Activated naive CD4-positive, alpha-beta T cell treated with anti-CD3 and anti-CD28 coated beads for 36 hours (primary cell): ENCODE measurements at regions of chr20 and their contacts with region 1.

Region 1: DNA sequence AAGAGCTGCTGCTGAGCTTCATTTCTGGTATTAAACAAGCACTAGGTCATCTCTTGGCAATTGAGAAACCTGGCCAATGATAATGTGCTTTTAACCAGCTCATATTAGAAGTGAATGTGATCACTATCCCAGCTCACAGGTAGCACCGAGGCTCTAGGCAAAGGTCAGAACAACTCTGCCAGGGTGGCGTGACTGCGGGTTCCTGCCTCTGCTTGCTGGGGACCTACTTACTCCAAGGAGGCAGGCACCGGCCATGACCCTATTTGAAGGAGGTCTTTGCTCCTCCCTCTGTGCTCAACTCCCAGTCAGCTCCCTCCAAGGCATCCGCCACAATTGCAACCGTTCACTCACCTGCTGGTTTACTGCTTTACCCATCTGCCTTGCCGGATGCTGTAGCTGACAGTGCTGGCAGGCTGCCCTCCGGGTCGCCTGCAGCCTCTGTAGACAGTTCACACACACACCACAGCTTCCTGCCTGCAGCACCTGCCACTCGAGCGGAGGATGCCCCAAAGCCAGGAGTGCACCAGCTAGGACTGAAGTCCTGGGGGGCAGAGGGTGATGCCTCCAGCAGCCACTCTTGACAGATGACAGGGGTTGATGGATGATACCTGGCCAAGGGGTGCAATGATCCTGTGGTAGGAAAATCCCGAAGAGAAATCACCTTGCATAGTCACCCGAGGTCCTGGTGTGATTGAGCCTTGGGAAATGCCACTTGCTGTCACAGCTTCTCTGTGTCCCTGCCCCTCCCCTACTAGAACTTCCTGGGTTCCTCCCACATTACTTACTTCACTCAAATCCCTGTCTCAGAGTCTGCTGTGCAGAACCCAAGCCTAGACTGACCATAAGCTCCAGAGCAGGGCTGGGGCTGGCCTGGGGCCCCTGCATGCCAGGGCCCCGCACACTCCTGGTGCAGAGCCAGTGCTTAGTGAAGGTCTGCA is 8.8 kb upstream of the VSX1 start:
- DNase-seq: peak; percentile 88
- H3K4me3 Mint-ChIP-seq: peak overlapping the region; percentile 41
- H3K27ac Mint-ChIP-seq: peak overlapping the region; percentile 44
- H3K4me1 Mint-ChIP-seq: peaks cover 28% of the 10 kb centered on the region
- H3K27me3 Mint-ChIP-seq: peaks cover 7% of the 10 kb centered on the region

Region 2: DNA sequence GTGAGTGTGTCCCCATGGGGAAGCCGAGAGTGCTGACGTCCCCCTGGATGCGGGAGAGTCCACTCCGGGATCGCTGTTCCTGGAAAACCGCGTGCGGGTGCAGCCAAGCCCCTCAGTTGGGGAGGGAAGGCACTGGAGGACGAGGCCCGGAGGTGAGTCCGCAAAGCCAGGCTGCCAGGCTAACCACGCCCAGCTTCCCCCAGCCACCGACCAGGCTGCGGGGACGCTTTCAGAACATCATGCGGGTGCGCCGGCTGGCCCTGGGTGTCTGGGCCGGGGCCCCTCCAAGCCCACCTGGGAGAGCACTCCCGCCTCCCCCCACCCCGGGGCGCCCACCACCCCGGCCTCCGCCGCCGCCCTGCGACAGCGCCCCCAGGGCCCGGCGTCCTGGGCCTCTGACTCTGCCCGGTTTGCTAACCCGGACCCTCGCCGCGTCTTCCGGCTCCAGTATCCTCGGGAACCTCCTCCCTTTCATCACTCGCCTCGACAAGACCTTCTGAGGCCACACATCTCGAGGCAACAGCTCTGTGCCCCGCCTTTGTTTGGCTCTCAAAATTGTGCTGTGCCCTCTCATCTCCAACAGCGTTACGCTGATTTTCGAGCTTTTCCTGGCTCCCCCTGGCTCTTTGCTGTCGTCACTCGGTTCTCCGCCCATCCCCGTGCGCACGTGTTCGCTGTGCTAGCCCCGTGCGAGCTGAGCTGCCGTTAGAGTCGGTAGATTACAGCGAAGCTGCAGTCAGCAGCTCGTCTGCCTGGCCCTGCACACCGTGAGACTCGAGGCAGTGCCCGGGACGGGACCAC is 57.6 kb after region 1 on chr20:
- CTCF ChIA-PET with region 1: no interaction called
- intact Hi-C with region 1: loop called (anchors 5 kb)
- DNase-seq: peak; percentile 80
- H3K4me3 Mint-ChIP-seq: peak overlapping the region; percentile 76
- H3K27ac Mint-ChIP-seq: no peak overlapping the region
- H3K4me1 Mint-ChIP-seq: peaks cover 6% of the 10 kb centered on the region
- H3K27me3 Mint-ChIP-seq: peaks cover 4% of the 10 kb centered on the region

Region 3: GRCh38 chr20:25418776-25419175 is 328.0 kb after region 1 on chr20:
- CTCF ChIA-PET with region 1: no interaction called
- intact Hi-C with region 1: no loop called
- DNase-seq: no peak
- H3K4me3 Mint-ChIP-seq: no peak overlapping the region
- H3K27ac Mint-ChIP-seq: no peak overlapping the region
- H3K4me1 Mint-ChIP-seq: no peaks in the 10 kb centered on the region
- H3K27me3 Mint-ChIP-seq: no peaks in the 10 kb centered on the region